AG04450 (cell line): ENCODE measurements at regions of chr17 and their contacts with region 1.

Region 1: GRCh38 chr17:75077496-75078283 is 10.1 kb upstream of the SLC16A5 start:
- DNase-seq: no peak
- H3K4me3 ChIP-seq: no peak overlapping the region
- H3K27ac ChIP-seq: no peak overlapping the region
- H3K27me3 ChIP-seq: no peaks in the 10 kb centered on the region
- CTCF ChIP-seq: peak; percentile 3; the same call in 1 of the 2 replicates

Region 2: GRCh38 chr17:75024686-75025397 is 52.8 kb before region 1 on chr17:
- CTCF ChIA-PET with region 1: no interaction called
- POLR2A ChIA-PET with region 1: interaction called, 10 read pairs
- DNase-seq: no peak
- H3K4me3 ChIP-seq: no peak overlapping the region
- H3K27ac ChIP-seq: no peak overlapping the region
- H3K27me3 ChIP-seq: no peaks in the 10 kb centered on the region
- CTCF ChIP-seq: no peak

Region 3: DNA sequence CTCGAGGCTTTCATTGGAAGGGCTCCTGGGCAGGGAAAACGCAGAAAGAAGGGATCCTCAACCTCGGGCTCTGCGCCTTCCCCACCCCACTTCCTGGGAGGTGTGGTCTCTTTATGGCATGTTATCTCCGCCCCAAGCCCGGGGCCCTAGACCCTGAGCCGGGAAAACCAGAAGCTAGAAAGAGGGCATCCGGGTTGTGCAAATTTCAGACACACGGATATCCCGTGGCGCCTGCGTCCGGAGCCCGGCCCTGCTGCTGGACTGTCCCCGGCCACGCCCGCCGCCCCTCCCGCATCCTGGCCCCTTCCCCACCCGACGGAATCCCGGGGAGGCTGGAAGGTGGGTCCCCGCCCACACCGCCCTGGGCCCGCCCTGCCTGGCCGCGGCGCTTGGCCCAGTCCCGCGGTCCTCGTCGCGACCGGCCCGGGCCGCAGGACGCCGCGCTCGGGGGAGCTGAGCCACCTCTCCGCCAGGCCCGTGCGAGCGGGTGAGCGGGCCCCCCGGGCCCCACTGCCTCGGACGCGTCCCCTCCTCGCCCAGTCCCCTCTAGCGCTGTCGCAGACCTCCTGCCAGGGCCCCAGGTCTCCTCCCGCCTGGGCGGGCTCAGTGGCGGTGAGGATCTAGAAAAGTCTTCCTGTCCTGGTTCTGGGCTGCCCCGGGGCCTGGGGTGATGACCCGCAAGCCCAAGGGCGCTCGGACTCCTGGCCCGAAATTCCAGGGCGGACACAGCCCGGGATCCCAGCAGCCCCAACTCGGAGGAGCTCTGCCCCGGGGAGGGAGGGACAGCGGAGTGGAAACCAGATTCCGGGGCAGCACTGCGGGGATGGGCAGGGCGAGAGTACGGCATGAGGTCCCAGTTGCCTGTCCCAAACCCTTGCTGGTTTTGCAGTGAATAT is 10.1 kb after region 1 on chr17 and contains the start of gene SLC16A5:
- CTCF ChIA-PET with region 1: no interaction called
- POLR2A ChIA-PET with region 1: interaction called, 16 read pairs
- DNase-seq: no peak
- H3K4me3 ChIP-seq: peak within 1 kb of the TSS; percentile 61
- H3K27ac ChIP-seq: peak within 1 kb of the TSS; percentile 75
- H3K27me3 ChIP-seq: no peaks in the 10 kb centered on the region
- CTCF ChIP-seq: no peak
- polyA plus RNA-seq, gene SLC16A5: 2.9 and 3.6 TPM in 2 replicates